ENCODE measurements at regions of chr11 and their contacts with region 1.

Region 1: DNA sequence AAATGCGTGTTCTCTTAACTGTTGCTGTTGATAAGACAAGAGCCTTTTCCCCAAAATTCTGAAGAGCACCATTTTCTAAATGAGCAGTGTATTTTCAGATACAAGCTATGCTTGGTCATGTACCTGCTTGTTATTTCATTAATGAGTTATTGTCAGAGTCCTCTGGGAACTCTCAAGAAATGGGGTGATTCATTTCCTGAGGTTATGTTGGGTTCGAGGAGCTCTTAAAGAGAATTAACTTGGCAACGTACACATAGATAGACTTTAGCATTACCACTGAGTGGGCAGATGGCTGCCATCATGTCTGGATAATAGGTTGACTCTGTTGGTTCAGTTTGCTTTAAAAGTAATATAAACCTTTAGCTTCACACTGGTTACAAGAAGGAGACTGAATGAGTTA is 87.9 kb upstream of the SORL1-AS1 start:
- DNase-seq: peak; percentile 40
- H3K4me3 Mint-ChIP-seq: no peak overlapping the region
- H3K27ac Mint-ChIP-seq: no peak overlapping the region
- H3K4me1 Mint-ChIP-seq: peaks cover 41% of the 10 kb centered on the region
- H3K27me3 Mint-ChIP-seq: no peaks in the 10 kb centered on the region

Region 2: GRCh38 chr11:121358760-121359159 is 181.9 kb before region 1 on chr11:
- intact Hi-C with region 1: no loop called
- DNase-seq: no peak
- H3K4me3 Mint-ChIP-seq: no peak overlapping the region
- H3K27ac Mint-ChIP-seq: no peak overlapping the region
- H3K4me1 Mint-ChIP-seq: no peaks in the 10 kb centered on the region
- H3K27me3 Mint-ChIP-seq: peaks cover 4% of the 10 kb centered on the region

Region 3: GRCh38 chr11:121582296-121582695 is 41.7 kb after region 1 on chr11:
- intact Hi-C with region 1: loop called (anchors 5 kb)
- DNase-seq: peak; percentile 74
- H3K4me3 Mint-ChIP-seq: peak overlapping the region; percentile 40
- H3K27ac Mint-ChIP-seq: peak overlapping the region; percentile 89
- H3K4me1 Mint-ChIP-seq: peaks cover 24% of the 10 kb centered on the region
- H3K27me3 Mint-ChIP-seq: no peaks in the 10 kb centered on the region

Measured in activated CD4-positive, alpha-beta T cell treated with anti-CD3 and anti-CD28 coated beads, Interleukin-2, amount 10 ng/mL, durations not matched to agents 24 days and 14 days (primary cell).